ENCODE measurements at regions of chr1 and their contacts with region 1.

Region 1: DNA sequence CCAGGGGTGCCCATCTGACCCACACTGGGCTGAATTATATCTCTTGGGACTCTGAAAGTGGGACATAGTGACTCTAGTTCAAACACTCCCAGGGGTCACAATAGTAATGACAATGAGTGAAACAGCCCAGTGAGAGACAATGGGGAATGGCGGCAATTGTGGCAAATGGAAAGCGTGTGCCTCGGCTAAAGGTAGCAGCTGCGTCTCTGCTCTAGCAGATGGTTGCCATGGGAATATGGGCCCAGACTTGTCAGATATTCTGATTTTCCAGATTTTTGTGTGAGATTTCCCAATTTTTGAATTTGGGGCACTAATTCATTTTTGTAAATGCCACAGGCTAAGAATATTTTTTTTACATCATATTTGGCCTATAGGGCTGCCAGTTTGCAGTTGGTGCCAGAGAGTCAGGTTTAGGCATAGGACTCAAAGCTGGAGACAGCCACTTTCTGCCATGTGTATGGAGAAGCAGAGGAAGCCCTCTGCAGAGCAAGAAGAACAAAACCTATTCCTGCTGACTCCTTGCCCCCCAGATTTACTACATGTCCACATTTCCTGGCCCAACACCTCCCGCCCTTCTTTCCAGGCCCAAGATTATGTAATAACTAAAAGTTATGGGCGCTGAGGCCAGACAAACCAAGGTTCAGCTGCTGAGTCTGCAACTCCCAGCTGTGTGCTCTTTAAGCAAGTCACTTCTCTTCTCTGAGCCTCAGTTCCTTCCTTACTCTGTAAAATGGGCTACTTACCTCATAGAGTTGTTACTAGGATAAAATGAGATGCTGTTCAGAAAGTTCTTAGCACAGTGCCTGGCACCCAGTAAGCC is 21.6 kb upstream of the PTP4A2 start:
- DNase-seq: peak; percentile 74
- H3K4me3 ChIP-seq: no peak overlapping the region
- H3K27ac ChIP-seq: no peak overlapping the region
- H3K4me1 ChIP-seq: peaks cover 0 to 22% (median 21%) of the 10 kb centered on the region in 4 donors
- H3K27me3 ChIP-seq: no peaks in the 10 kb centered on the region
- CTCF ChIP-seq: no peak
- EP300 ChIP-seq: no peak
- POLR2A ChIP-seq: no peak

Region 2: DNA sequence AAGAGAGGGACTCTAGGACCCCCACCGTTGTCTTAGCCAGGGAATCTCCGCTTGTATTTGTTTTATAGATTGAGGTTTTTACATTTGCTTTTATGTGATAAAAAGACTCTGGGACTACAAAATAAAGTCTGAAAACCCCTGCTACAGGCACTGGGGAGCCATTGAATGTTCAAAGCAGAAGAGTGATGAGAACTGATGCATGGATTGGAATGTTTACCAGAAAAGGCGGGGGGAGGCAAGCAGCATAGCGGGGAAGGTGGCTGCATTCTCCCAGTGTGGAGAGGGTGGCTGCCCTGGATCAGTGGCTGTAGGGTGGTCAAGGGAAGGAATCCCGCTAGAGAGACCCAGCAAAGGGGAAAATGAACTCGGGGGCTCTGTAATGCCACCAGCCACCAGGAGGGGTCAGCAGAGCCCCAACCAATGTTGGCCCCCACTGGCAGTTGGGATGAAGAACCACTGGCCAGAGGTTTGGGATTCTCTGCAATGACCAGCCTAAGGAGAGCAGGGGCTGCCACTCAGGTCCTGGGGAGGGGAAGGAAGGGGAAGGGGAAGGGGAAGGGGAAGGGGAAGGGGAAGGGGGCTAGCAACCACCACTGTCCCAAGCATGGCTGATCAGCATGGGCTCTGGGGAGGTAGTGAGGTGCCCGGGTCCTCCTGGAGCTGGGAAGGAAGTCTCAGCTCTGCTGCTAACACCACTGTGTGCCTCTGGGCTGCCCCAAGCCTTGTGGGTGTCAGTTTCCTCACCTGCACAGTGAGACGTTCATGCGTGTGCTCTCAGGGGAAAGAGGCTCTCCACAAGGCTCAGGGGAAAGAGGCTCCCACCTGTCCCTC is 295.9 kb before region 1 on chr1:
- intact Hi-C with region 1: loop called (anchors 10 kb)
- DNase-seq: peak; percentile 82
- H3K4me3 ChIP-seq: no peak overlapping the region
- H3K27ac ChIP-seq: no peak overlapping the region
- H3K4me1 ChIP-seq: peaks cover 0 to 34% (median 23%) of the 10 kb centered on the region in 4 donors
- H3K27me3 ChIP-seq: no peaks in the 10 kb centered on the region
- CTCF ChIP-seq: peak; percentile 95 to 99 (median 96)
- EP300 ChIP-seq: no peak
- POLR2A ChIP-seq: no peak

Region 3: GRCh38 chr1:31762726-31763670 is 196.7 kb before region 1 on chr1:
- intact Hi-C with region 1: loop called (anchors 5 kb)
- DNase-seq: peak; percentile 81
- H3K4me3 ChIP-seq: peak overlapping the region; percentile 29 to 59 (median 55)
- H3K27ac ChIP-seq: peak overlapping the region in 1 of 4 donors; percentile 35
- H3K4me1 ChIP-seq: peaks cover 0 to 44% (median 41%) of the 10 kb centered on the region in 4 donors
- H3K27me3 ChIP-seq: peaks cover 0 to 36% (median 13%) of the 10 kb centered on the region in 3 donors
- CTCF ChIP-seq: peak in 2 of 4 experiments; percentile 48 to 72
- EP300 ChIP-seq: no peak
- POLR2A ChIP-seq: no peak

Region 4: GRCh38 chr1:31923901-31924535 is 35.7 kb before region 1 on chr1:
- intact Hi-C with region 1: loop called (anchors 5 kb)
- DNase-seq: no peak
- H3K4me3 ChIP-seq: no peak overlapping the region
- H3K27ac ChIP-seq: peak overlapping the region in 1 of 4 donors; percentile 28
- H3K4me1 ChIP-seq: peaks cover 0 to 82% (median 77%) of the 10 kb centered on the region in 4 donors
- H3K27me3 ChIP-seq: no peaks in the 10 kb centered on the region
- CTCF ChIP-seq: no peak
- EP300 ChIP-seq: no peak
- POLR2A ChIP-seq: no peak

Region 5: DNA sequence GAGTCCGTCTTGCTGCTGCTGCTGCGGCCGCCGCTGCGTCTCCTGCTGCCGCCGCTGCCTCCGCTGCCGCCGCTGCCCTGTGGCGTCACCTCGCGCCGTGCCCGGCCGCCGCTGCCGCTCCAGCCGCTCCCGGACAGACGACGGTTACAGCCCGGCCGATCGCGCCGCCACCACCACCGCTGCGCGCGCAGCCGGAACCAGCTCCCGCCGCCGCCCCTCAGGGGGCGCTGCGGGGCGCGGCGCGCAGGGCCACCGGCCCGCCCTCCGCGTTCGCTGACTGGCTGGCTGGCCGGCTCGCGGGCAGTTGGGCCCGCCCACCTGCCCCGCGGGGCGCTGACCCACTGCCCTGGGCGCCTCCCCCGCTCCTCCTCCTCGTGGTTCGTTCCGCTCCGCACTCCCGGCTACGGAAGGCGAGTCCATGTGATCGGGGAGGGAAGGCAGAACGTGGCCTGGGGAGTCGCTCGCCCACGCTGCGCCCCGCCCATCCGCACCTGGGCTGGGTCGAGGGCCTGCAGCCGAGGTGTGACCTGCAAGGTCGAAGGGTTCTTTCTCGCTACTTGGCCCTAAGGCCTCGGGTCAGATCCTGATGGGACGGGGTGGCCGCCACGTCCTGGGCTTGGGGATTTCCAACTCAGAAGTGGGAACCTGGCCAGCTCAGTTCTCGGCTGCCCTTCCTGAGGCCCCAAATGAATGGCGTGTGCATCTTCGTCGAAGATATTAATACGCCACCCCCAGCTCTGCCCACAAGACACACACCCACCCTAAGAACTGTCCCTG is 21.4 kb before region 1 on chr1 and contains the start of gene PTP4A2:
- intact Hi-C with region 1: loop called (anchors 2 kb)
- DNase-seq: peak; percentile 97
- H3K4me3 ChIP-seq: peak within 1 kb of the TSS; percentile 74 to 90 (median 80)
- H3K27ac ChIP-seq: peak within 1 kb of the TSS; percentile 95 to 97 (median 96)
- H3K4me1 ChIP-seq: peaks cover 0 to 60% (median 50%) of the 10 kb centered on the region in 4 donors
- H3K27me3 ChIP-seq: no peaks in the 10 kb centered on the region
- CTCF ChIP-seq: peak in 1 of 4 experiments; percentile 48
- EP300 ChIP-seq: no peak
- POLR2A ChIP-seq: no peak
- total RNA-seq, gene PTP4A2: 226 to 327 (median 255) TPM

Region 6: DNA sequence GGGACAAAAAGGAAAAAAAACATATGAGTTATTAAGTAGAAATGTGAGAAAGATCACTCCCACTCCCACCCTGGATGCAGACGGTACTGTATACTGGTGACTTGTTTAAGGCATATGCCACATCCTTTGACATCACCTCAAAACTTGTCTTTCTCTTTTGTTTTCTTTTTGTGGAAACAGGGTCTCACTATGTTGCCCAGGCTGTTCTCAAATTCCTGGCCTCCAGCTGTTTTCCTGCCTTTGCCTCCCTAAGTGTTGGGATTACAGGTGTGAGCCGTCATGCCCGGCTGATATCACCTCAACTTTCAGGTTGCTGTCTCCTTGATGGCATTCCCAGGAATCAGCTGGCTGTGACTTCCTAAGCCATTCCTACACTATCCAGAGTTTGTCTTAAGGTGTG is 35.5 kb after region 1 on chr1:
- intact Hi-C with region 1: no loop called
- DNase-seq: no peak
- H3K4me3 ChIP-seq: no peak overlapping the region
- H3K27ac ChIP-seq: no peak overlapping the region
- H3K4me1 ChIP-seq: no peaks in the 10 kb centered on the region
- H3K27me3 ChIP-seq: no peaks in the 10 kb centered on the region
- CTCF ChIP-seq: no peak
- EP300 ChIP-seq: no peak
- POLR2A ChIP-seq: no peak

Region 7: GRCh38 chr1:32005522-32005921 is 45.8 kb after region 1 on chr1:
- intact Hi-C with region 1: no loop called
- DNase-seq: no peak
- H3K4me3 ChIP-seq: no peak overlapping the region
- H3K27ac ChIP-seq: no peak overlapping the region
- H3K4me1 ChIP-seq: no peaks in the 10 kb centered on the region
- H3K27me3 ChIP-seq: no peaks in the 10 kb centered on the region
- CTCF ChIP-seq: no peak
- EP300 ChIP-seq: no peak
- POLR2A ChIP-seq: no peak

Region 8: GRCh38 chr1:32063261-32063681 is 103.5 kb after region 1 on chr1:
- intact Hi-C with region 1: loop called (anchors 5 kb)
- DNase-seq: no peak
- H3K4me3 ChIP-seq: no peak overlapping the region
- H3K27ac ChIP-seq: peak overlapping the region; percentile 47 to 70 (median 58)
- H3K4me1 ChIP-seq: peaks cover 0 to 17% (median 13%) of the 10 kb centered on the region in 4 donors
- H3K27me3 ChIP-seq: no peaks in the 10 kb centered on the region
- CTCF ChIP-seq: peak; percentile 59 to 71 (median 64)
- EP300 ChIP-seq: no peak
- POLR2A ChIP-seq: no peak

Region 9: GRCh38 chr1:32247983-32248889 is 288.5 kb after region 1 on chr1:
- intact Hi-C with region 1: no loop called
- DNase-seq: peak; percentile 90
- H3K4me3 ChIP-seq: no peak overlapping the region
- H3K27ac ChIP-seq: peak overlapping the region in 3 of 4 donors; percentile 42 to 74 (median 57)
- H3K4me1 ChIP-seq: peaks cover 0 to 25% (median 18%) of the 10 kb centered on the region in 4 donors
- H3K27me3 ChIP-seq: no peaks in the 10 kb centered on the region
- CTCF ChIP-seq: peak in 3 of 4 experiments; percentile 43 to 75 (median 62)
- EP300 ChIP-seq: no peak
- POLR2A ChIP-seq: no peak

Region 10: DNA sequence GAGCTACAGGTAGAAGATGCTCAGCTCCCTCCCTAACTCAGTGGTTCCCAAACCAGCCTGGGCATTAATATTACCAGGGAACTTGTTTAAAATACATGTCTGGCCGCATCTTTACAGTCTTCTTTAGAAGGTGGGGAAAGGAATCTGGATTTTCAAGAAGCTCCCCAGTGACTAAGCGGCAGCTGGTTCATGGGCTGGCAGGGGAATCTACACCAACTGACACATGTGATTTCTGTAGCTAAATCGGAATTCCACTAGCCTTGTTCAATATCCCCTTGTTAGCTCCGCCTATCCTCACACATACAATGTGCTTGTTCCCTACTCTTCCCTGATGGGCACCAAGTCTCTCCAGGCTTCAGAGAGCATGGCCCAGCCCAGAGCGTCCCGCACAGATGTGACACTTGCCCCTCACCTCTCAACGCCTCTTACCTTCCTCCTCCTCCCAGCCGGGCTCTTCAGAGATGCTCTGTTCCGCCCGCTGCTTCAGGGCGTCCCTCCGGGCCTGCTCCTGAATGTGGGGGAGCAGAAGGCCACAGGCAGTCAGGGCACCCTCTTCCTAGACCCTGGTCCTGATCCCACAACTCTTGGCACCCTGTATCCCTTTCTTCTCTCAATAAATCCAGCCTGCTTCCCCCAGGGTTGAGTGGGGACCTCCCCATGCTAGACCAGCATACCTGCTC is 417.9 kb after region 1 on chr1:
- intact Hi-C with region 1: no loop called
- DNase-seq: no peak
- H3K4me3 ChIP-seq: no peak overlapping the region
- H3K27ac ChIP-seq: no peak overlapping the region
- H3K4me1 ChIP-seq: no peaks in the 10 kb centered on the region
- H3K27me3 ChIP-seq: no peaks in the 10 kb centered on the region
- CTCF ChIP-seq: no peak
- EP300 ChIP-seq: no peak
- POLR2A ChIP-seq: no peak

Measured in sigmoid colon (tissue), 7 donors.